BJ (cell line): ENCODE measurements at regions of chr6 and their contacts with region 1.

Region 1: DNA sequence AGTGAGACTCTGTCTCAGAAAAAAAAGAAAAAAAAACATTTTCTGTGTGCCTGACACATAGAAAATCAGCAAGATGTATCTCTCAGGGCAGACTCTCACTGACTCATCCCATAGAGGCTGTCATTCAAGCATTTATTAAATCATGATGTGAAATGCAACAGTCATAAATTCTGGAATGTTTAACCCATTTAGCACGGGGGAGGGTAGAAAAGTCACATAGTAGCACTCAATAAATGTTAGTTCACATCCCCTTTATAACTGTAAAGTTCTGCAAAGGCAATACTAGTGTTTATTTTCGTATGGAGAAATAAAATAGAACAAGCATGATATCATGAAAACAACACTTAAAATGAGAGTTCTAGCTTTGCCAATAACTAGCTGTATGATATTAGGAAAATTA is 15.5 kb upstream of the CARMIL1 start:
- DNase-seq: peak; percentile 96
- H3K4me3 ChIP-seq: no peak overlapping the region
- H3K27me3 ChIP-seq: no peaks in the 10 kb centered on the region
- CTCF ChIP-seq: no peak

Region 2: GRCh38 chr6:25278914-25279747 is 15.5 kb after region 1 on chr6 and contains the start of gene CARMIL1:
- CTCF ChIA-PET with region 1: interaction called, 43 read pairs
- POLR2A ChIA-PET with region 1: interaction called, 3 read pairs
- DNase-seq: no peak
- H3K4me3 ChIP-seq: peak within 1 kb of the TSS; percentile 63
- H3K27me3 ChIP-seq: no peaks in the 10 kb centered on the region
- CTCF ChIP-seq: peak; percentile 82
- polyA plus RNA-seq, gene CARMIL1: 3.7 and 6.0 TPM in 2 replicates

Region 3: DNA sequence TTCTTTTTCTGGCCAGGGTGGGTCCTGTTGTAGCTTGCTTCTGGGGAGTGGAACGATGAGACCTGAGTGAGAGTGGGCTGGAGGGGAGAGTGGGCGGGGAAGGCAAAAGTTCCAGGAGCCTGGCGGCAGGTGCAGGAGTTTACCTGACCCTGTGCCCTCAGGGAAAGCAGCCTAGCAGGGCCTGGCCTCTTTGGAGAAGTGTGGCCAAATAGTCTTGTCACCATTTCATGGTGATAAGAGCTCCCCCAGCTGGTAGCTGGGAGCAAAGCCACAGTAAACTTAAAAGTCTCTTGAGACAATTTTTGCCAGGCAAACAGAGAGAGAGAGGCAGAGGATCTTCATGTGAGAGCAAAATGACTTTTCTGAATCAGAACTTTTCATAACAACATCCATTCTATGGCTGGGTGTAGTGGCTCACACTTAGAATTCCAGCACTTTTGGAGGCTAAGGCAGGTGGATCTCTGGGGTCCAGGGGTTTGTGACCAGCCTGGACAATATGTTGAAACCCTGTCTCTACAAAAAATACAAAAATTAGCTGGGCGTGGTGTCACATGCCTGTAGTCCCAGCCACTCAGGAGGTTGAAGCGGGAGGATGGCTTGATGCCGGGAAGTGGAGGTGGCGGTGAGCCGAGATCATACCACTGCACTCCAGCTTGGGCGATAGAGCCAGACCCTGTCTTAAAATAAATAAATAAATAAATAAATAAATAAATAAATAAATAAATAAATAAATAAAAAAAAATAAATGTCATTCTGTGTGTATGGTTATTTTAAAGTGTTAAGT is 226.6 kb after region 1 on chr6:
- CTCF ChIA-PET with region 1: interaction called, 61 read pairs
- POLR2A ChIA-PET with region 1: no interaction called
- DNase-seq: peak; percentile 29
- H3K4me3 ChIP-seq: no peak overlapping the region
- H3K27me3 ChIP-seq: no peaks in the 10 kb centered on the region
- CTCF ChIP-seq: peak; percentile 92

Region 4: GRCh38 chr6:25556516-25556915 is 292.9 kb after region 1 on chr6:
- CTCF ChIA-PET with region 1: interaction called, 32 read pairs
- POLR2A ChIA-PET with region 1: no interaction called
- DNase-seq: peak; percentile 6
- H3K4me3 ChIP-seq: no peak overlapping the region
- H3K27me3 ChIP-seq: no peaks in the 10 kb centered on the region
- CTCF ChIP-seq: peak; percentile 84

Region 5: DNA sequence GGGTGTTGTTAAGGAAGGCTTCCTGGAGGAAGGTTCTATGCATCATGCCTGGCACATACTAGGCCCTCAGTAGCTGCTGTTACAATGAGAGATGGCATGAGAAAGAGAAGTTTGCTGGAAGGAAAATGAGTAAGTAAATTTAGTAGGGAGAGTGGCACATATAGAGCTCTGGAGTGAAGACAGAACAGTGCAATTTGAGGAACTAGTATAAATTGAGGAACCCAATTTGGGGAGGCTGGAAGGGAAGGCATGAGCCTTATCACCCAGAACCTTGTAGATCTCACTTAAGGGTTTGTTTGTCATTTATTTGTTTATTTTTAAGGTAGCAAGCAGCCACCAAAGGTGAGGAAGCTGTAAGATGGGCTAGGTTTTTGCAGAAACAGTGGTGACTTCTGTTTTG is 301.3 kb after region 1 on chr6:
- CTCF ChIA-PET with region 1: interaction called, 11 read pairs
- POLR2A ChIA-PET with region 1: no interaction called
- DNase-seq: no peak
- H3K4me3 ChIP-seq: no peak overlapping the region
- H3K27me3 ChIP-seq: no peaks in the 10 kb centered on the region
- CTCF ChIP-seq: no peak

Region 6: GRCh38 chr6:27132532-27133280 is 1869.0 kb after region 1 on chr6:
- CTCF ChIA-PET with region 1: no interaction called
- POLR2A ChIA-PET with region 1: interaction called, 28 read pairs
- DNase-seq: peak; percentile 100
- H3K4me3 ChIP-seq: peak overlapping the region; percentile 59
- H3K27me3 ChIP-seq: no peaks in the 10 kb centered on the region
- CTCF ChIP-seq: no peak